ENCODE measurements at regions of chr20 and their contacts with region 1.

Region 1: GRCh38 chr20:63520504-63520933 is at the start of gene PPDPF:
- DNase-seq: peak; percentile 95
- H3K4me3 Mint-ChIP-seq: peak within 1 kb of the TSS; percentile 83
- H3K27ac Mint-ChIP-seq: peak within 1 kb of the TSS; percentile 74
- H3K4me1 Mint-ChIP-seq: peaks cover 12% of the 10 kb centered on the region
- H3K27me3 Mint-ChIP-seq: peaks cover 8% of the 10 kb centered on the region
- total RNA-seq, gene PPDPF: 125 and 130 TPM in 2 replicates

Region 2: GRCh38 chr20:63442100-63442493 is 78.4 kb before region 1 on chr20:
- intact Hi-C with region 1: loop called (anchors 2 kb)
- DNase-seq: peak; percentile 86
- H3K4me3 Mint-ChIP-seq: peak overlapping the region; percentile 23
- H3K27ac Mint-ChIP-seq: peak overlapping the region; percentile 67
- H3K4me1 Mint-ChIP-seq: peaks cover 15% of the 10 kb centered on the region
- H3K27me3 Mint-ChIP-seq: peaks cover 2% of the 10 kb centered on the region

Region 3: GRCh38 chr20:63495741-63496595 is 24.6 kb before region 1 on chr20:
- intact Hi-C with region 1: loop called (anchors 2 kb)
- DNase-seq: peak; percentile 91
- H3K4me3 Mint-ChIP-seq: peak overlapping the region; percentile 64
- H3K27ac Mint-ChIP-seq: no peak overlapping the region
- H3K4me1 Mint-ChIP-seq: peaks cover 2% of the 10 kb centered on the region
- H3K27me3 Mint-ChIP-seq: peaks cover 22% of the 10 kb centered on the region

Region 4: DNA sequence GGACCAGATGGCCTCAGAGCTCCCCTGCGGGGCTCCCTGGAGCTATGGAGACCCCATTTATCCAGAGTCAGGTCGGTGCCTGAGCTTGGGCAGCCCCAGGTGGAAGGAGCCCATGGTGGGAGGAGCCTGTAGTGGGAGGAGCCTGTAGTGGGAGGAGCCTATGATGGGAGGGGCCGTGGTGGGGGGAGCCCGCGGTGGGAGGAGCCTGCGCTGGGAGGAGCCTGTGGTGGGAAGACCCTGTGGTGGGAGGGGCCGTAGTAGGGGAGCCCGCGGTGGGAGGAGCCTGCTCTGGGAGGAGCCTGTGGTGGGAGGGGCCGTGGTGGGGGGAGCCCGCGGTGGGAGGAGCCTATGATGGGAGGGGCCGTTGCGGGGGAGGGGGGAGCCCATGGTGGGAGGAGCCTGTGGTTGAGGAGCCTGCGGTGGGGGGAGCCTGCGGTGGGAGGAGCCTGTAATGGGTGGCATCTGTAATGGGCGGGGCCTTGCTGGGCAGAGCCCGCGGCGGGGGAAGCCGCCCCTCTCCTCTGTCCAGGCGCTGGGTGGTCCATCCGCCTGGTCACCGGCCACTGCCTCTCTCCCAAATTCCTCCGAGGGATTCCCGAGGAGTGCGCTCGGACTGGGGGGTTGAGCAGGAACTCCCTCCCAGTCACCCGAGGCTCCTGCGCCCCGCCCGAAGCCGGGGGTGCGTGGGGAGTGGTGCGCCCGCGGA is 32.9 kb after region 1 on chr20:
- intact Hi-C with region 1: loop called (anchors 1 kb)
- DNase-seq: peak; percentile 97
- H3K4me3 Mint-ChIP-seq: peak overlapping the region; percentile 77
- H3K27ac Mint-ChIP-seq: peak overlapping the region; percentile 76
- H3K4me1 Mint-ChIP-seq: peaks cover 12% of the 10 kb centered on the region
- H3K27me3 Mint-ChIP-seq: peaks cover 15% of the 10 kb centered on the region

Region 5: DNA sequence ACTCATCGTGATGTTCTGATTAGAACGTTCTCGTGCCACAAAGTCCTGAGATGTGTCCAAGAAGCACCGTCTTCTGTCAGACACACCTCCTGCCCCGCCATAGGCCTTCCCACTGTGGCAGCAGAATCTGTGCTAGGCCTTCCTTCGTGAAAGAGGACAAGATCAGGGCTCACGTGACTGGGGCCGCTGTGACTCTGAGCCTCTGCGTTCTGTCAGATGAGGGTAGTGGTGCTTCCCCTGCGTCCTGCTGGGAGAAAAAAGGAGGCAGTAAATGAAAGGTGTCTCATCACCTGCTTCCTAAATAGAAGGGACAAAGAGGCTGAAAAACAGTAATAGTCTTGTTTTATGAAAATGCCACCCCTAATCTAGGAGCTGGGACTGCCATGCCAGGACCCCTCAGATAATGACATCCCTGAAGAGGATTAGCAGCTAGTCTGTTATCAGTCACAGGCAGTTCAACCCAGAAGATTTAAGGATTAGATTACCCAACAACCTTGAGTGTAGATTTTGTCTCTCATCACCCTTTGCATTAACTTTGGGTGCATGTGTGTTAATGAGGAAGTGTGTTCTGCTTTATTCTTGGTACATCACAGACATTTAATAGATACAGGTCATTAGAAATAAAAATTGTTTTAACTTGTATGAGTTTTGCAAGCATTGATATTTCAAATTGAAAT is 378.5 kb after region 1 on chr20:
- intact Hi-C with region 1: no loop called
- DNase-seq: no peak
- H3K4me3 Mint-ChIP-seq: no peak overlapping the region
- H3K27ac Mint-ChIP-seq: peak overlapping the region; percentile 41
- H3K4me1 Mint-ChIP-seq: peaks cover 52% of the 10 kb centered on the region
- H3K27me3 Mint-ChIP-seq: peaks cover 2% of the 10 kb centered on the region

Region 6: DNA sequence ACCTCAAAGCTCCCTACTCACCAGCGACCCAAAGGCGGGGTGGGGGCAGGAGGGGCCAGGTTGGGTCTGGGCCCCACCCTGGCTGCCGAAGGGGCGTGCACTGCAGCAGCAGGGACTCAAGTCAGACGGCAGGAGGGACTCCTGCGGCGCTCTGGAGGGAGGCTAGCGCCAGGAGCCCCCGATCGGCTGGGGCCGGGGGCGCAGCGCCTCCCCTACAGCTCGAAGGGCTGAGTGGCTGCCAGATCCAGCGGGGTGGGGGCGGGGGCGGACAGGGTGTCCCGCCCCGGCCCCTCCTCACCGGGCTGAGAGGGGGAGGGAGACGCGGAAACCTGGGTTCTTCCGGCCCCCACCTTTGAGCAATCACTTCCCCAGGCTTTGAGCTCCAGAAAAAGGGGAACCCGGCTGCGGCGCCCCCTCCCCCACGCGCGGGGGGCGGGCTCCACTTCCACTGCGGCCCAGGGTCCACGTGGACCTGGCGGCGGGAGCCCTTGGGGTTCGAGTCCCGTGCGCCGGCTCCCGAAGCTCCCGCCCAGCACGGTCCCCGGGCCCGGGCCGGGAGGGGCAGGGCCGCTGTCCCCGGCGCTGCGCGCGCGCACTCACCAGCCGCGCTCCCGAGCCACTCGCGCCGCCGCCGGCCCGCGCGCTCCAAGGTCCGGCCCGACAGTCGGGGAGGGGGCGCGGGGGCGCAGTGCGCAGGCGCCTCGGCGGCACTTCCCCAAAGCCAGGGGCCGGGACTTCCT is 558.9 kb after region 1 on chr20 and contains the start of gene RGS19:
- intact Hi-C with region 1: loop called (anchors 5 kb)
- DNase-seq: peak; percentile 93
- H3K4me3 Mint-ChIP-seq: peak within 1 kb of the TSS; percentile 95
- H3K27ac Mint-ChIP-seq: peak within 1 kb of the TSS; percentile 80
- H3K4me1 Mint-ChIP-seq: peaks cover 29% of the 10 kb centered on the region
- H3K27me3 Mint-ChIP-seq: peaks cover 13% of the 10 kb centered on the region
- total RNA-seq, gene RGS19: 50.0 TPM in 2 replicates

Measured in activated CD4-positive, alpha-beta T cell treated with anti-CD3 and anti-CD28 coated beads, Interleukin-2, amount 10 ng/mL, durations not matched to agents 24 days and 14 days (primary cell).